SK-N-SH (cell line): ENCODE measurements at regions of chr11 and their contacts with region 1.

Region 1: GRCh38 chr11:31870609-31871309 is 59.6 kb upstream of the PAX6 start:
- DNase-seq: peak; percentile 49
- H3K4me3 ChIP-seq: peak overlapping the region in 1 of 2 experiments; percentile 45; a peak in 1 of 4 replicates
- H3K27ac ChIP-seq: no peak overlapping the region
- H3K4me1 ChIP-seq: 0 out of 4 replicates have a peak, but pooled peaks cover 0 to 3% of the 10 kb centered on the region in 2 experiments
- H3K27me3 ChIP-seq: peaks cover 11% of the 10 kb centered on the region; the same call in 1 of the 2 replicates
- CTCF ChIP-seq: peak; percentile 71
- EP300 ChIP-seq: no peak
- RAD21 ChIP-seq: peak; percentile 80

Region 2: GRCh38 chr11:31240338-31240904 is 630.3 kb before region 1 on chr11:
- CTCF ChIA-PET with region 1: interaction called, 43 read pairs
- POLR2A ChIA-PET with region 1: no interaction called
- DNase-seq: peak; percentile 14
- H3K4me3 ChIP-seq: no peak overlapping the region; a peak in 1 of 4 replicates
- H3K27ac ChIP-seq: no peak overlapping the region
- H3K4me1 ChIP-seq: peaks cover 0 to 14% of the 10 kb centered on the region in 2 experiments; a peak in 1 of 4 replicates
- H3K27me3 ChIP-seq: no peaks in the 10 kb centered on the region
- CTCF ChIP-seq: peak; percentile 70
- EP300 ChIP-seq: no peak
- RAD21 ChIP-seq: peak; percentile 78

Region 3: DNA sequence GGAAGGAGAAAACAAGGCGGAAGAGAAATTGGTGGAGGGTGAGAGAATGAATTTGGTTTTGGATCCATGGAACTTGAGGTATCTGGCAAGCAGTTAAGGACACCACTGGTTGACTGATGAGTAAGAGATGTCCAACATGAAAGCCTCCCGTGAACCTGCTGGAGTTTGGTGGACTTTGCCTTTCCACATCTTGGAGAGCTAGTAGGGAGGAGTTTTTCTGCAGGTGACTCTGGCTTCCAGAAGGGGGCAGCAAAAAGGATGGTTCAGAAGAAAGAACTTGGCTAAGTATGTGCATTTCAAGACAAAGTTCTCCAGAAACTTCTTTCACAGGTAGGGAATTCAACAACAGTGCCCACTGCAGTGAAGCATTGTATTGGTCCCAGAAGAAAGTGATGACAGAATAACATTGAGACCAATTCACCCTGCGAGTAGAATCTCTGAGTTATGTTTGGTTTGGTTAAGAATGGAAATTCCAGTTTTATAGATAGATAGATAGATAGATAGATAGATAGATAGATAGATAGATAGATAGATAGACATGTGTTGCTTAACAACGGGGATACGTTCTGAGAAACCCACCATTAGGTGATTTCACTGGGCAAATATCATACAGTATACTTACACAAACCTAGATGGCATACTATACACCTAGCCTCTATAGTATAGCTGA is 529.7 kb before region 1 on chr11:
- CTCF ChIA-PET with region 1: interaction called, 16 read pairs
- POLR2A ChIA-PET with region 1: no interaction called
- DNase-seq: peak; percentile 12
- H3K4me3 ChIP-seq: no peak overlapping the region
- H3K27ac ChIP-seq: no peak overlapping the region
- H3K4me1 ChIP-seq: no peaks in the 10 kb centered on the region
- H3K27me3 ChIP-seq: no peaks in the 10 kb centered on the region
- CTCF ChIP-seq: peak; percentile 66
- EP300 ChIP-seq: no peak
- RAD21 ChIP-seq: peak; percentile 46; the same call in 1 of the 2 replicates

Region 4: GRCh38 chr11:31397239-31397834 is 473.4 kb before region 1 on chr11:
- CTCF ChIA-PET with region 1: interaction called, 40 read pairs
- POLR2A ChIA-PET with region 1: no interaction called
- DNase-seq: peak; percentile 25
- H3K4me3 ChIP-seq: peak overlapping the region in 1 of 2 experiments; percentile 10; a peak in 1 of 4 replicates
- H3K27ac ChIP-seq: no peak overlapping the region
- H3K4me1 ChIP-seq: no peaks in the 10 kb centered on the region
- H3K27me3 ChIP-seq: no peaks in the 10 kb centered on the region
- CTCF ChIP-seq: peak; percentile 79
- EP300 ChIP-seq: no peak
- RAD21 ChIP-seq: peak; percentile 82

Region 5: GRCh38 chr11:31493235-31493634 is 377.5 kb before region 1 on chr11:
- CTCF ChIA-PET with region 1: no interaction called
- POLR2A ChIA-PET with region 1: no interaction called
- DNase-seq: no peak
- H3K4me3 ChIP-seq: no peak overlapping the region
- H3K27ac ChIP-seq: no peak overlapping the region
- H3K4me1 ChIP-seq: no peaks in the 10 kb centered on the region
- H3K27me3 ChIP-seq: no peaks in the 10 kb centered on the region
- CTCF ChIP-seq: no peak
- EP300 ChIP-seq: no peak
- RAD21 ChIP-seq: no peak

Region 6: DNA sequence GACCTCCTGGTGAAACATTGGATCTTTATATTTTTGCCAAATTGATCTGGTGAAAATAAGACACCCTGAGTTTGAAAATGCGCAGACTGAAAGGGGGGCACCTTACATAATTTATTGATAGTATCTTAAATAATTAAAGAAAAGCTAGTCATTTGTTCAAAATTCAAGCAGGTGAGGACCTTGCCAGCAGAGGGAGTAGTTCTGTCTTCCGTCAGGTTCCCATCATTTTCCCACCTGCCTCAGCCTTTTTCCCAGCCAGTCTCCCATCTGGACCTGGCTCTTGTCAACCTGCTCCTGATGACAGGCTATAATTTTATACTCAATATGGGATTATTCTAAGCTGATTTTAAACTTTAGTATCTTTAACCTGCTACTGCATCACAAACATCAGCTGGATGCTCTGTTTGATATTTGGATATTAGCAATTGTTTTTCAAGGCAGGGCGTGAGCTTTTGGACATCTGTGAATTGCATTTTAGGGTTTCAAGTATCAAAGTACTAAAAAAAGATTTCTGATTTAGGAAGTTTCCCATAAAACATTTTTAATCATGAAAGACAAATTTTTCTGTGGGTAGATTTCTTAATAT is 229.2 kb before region 1 on chr11:
- CTCF ChIA-PET with region 1: interaction called, 15 read pairs
- POLR2A ChIA-PET with region 1: no interaction called
- DNase-seq: peak; percentile 5
- H3K4me3 ChIP-seq: no peak overlapping the region
- H3K27ac ChIP-seq: no peak overlapping the region
- H3K4me1 ChIP-seq: peaks cover 0 to 21% of the 10 kb centered on the region in 2 experiments; a peak in 3 of 4 replicates
- H3K27me3 ChIP-seq: no peaks in the 10 kb centered on the region
- CTCF ChIP-seq: peak; percentile 75
- EP300 ChIP-seq: no peak
- RAD21 ChIP-seq: peak; percentile 58

Region 7: GRCh38 chr11:31856248-31856647 is 14.5 kb before region 1 on chr11:
- CTCF ChIA-PET with region 1: interaction called, 10 read pairs
- POLR2A ChIA-PET with region 1: no interaction called
- DNase-seq: no peak
- H3K4me3 ChIP-seq: no peak overlapping the region
- H3K27ac ChIP-seq: no peak overlapping the region
- H3K4me1 ChIP-seq: no peaks in the 10 kb centered on the region
- H3K27me3 ChIP-seq: no peaks in the 10 kb centered on the region; the same call in 1 of the 2 replicates
- CTCF ChIP-seq: no peak
- EP300 ChIP-seq: no peak
- RAD21 ChIP-seq: no peak